T-cell (primary cell): ENCODE measurements at regions of chr15 and their contacts with region 1.

Region 1: GRCh38 chr15:78241007-78241406 is 6.6 kb upstream of the ACSBG1 start:
- DNase-seq: peak; percentile 46 to 86 (median 75)
- ATAC-seq: peak; percentile 88 to 97 (median 94)
- H3K4me3 ChIP-seq: no peak overlapping the region
- H3K4me3 Mint-ChIP-seq: no peak overlapping the region
- H3K27ac ChIP-seq: no peak overlapping the region
- H3K27ac Mint-ChIP-seq: peak overlapping the region in 1 of 2 donors; percentile 22
- H3K4me1 ChIP-seq: peaks cover 0 to 4% of the 10 kb centered on the region in 2 experiments
- H3K4me1 Mint-ChIP-seq: peaks cover 0 to 2% (median 2%) of the 10 kb centered on the region in 3 donors
- H3K27me3 ChIP-seq: peaks cover 0 to 8% of the 10 kb centered on the region in 2 experiments
- H3K27me3 Mint-ChIP-seq: peaks cover 2 to 3% of the 10 kb centered on the region in 2 donors

Region 2: GRCh38 chr15:78061963-78062435 is 179.0 kb before region 1 on chr15:
- CTCF ChIA-PET with region 1: no interaction called
- POLR2A ChIA-PET with region 1: no interaction called
- DNase-seq: peak in 18 of 35 experiments; percentile 24 to 66 (median 35)
- ATAC-seq: peak; percentile 74 to 88 (median 76)
- H3K4me3 ChIP-seq: peak overlapping the region; percentile 11 to 34
- H3K4me3 Mint-ChIP-seq: peak overlapping the region; percentile 75 to 76 (median 76)
- H3K27ac ChIP-seq: peak overlapping the region; percentile 82
- H3K27ac Mint-ChIP-seq: peak overlapping the region; percentile 94 to 97
- H3K4me1 ChIP-seq: peaks cover 70 to 80% of the 10 kb centered on the region in 2 experiments
- H3K4me1 Mint-ChIP-seq: peaks cover 37 to 46% (median 46%) of the 10 kb centered on the region in 3 donors
- H3K27me3 ChIP-seq: no peaks in the 10 kb centered on the region
- H3K27me3 Mint-ChIP-seq: no peaks in the 10 kb centered on the region

Region 3: DNA sequence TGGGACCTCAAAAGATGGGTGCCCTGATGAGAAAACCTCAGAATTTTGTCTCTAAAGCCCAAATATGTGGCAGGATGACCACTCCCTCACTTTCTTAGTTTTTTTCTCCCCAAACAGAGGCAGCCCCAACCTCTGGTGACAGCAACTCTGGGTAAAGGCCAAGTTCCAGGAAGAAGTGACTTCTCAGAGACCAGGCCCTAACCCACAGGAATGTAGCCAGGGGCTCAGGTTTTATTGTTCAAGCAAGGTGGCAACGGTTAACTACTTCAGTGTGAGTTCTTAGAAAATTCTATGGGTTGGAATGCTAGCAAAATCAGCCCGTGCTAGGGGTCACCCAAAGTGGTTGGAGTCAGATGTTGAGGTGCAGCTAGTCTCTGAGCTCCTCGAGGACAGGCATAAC is 18.2 kb after region 1 on chr15:
- CTCF ChIA-PET with region 1: no interaction called
- POLR2A ChIA-PET with region 1: interaction called in 1 of 2 experiments, 12 read pairs
- DNase-seq: no peak
- ATAC-seq: no peak
- H3K4me3 ChIP-seq: no peak overlapping the region
- H3K4me3 Mint-ChIP-seq: no peak overlapping the region
- H3K27ac ChIP-seq: no peak overlapping the region
- H3K27ac Mint-ChIP-seq: no peak overlapping the region
- H3K4me1 ChIP-seq: peaks cover 0 to 8% of the 10 kb centered on the region in 2 experiments
- H3K4me1 Mint-ChIP-seq: no peaks in the 10 kb centered on the region
- H3K27me3 ChIP-seq: peaks cover 0 to 6% of the 10 kb centered on the region in 2 experiments
- H3K27me3 Mint-ChIP-seq: no peaks in the 10 kb centered on the region

Region 4: GRCh38 chr15:78329625-78330024 is 88.6 kb after region 1 on chr15:
- CTCF ChIA-PET with region 1: no interaction called
- POLR2A ChIA-PET with region 1: no interaction called
- DNase-seq: no peak
- ATAC-seq: no peak
- H3K4me3 ChIP-seq: no peak overlapping the region
- H3K4me3 Mint-ChIP-seq: no peak overlapping the region
- H3K27ac ChIP-seq: no peak overlapping the region
- H3K27ac Mint-ChIP-seq: no peak overlapping the region
- H3K4me1 ChIP-seq: no peaks in the 10 kb centered on the region
- H3K4me1 Mint-ChIP-seq: no peaks in the 10 kb centered on the region
- H3K27me3 ChIP-seq: peaks cover 0 to 3% of the 10 kb centered on the region in 2 experiments
- H3K27me3 Mint-ChIP-seq: no peaks in the 10 kb centered on the region